ENCODE measurements at regions of chr1 and their contacts with region 1.

Region 1: GRCh38 chr1:151968058-151968457 is 25.6 kb downstream of the S100A10 start:
- DNase-seq: peak in 4 of 5 donors; percentile 30 to 74 (median 71)
- H3K4me3 ChIP-seq: no peak overlapping the region
- H3K4me3 Mint-ChIP-seq: no peak overlapping the region
- H3K27ac ChIP-seq: no peak overlapping the region
- H3K27ac Mint-ChIP-seq: no peak overlapping the region
- H3K4me1 ChIP-seq: peaks cover 5% of the 10 kb centered on the region
- H3K4me1 Mint-ChIP-seq: peaks cover 7 to 13% (median 11%) of the 10 kb centered on the region in 3 donors
- H3K27me3 ChIP-seq: no peaks in the 10 kb centered on the region
- H3K27me3 Mint-ChIP-seq: peaks cover 4% of the 10 kb centered on the region in 2 donors

Region 2: DNA sequence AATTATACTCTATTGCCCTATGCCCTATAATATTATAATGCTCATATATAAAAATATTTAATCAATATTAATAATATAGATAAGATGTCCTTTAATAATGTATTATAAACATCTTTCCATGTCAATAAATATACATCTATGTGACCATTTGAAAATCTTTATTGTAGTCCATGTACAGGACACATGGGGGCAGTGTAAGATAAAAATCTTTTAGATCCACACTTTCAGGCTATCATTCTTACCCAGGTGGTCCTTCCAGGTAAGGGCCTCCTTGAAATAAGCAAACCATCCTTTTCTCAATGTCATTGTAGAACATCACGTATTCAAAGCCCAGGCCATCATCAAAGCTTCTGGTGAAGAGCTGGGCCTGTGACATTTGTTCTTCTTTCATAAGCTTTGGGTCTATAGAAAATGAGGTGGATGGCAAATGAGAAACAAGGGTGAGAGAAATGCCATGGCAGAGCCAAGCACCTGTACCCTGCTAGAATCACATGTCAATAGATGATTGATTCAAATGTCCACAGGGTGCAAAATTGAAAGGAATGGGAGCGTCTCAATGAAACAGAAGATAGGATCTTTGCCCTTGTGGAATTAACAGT is 79.0 kb before region 1 on chr1:
- CTCF ChIA-PET with region 1: interaction called, 10 read pairs
- POLR2A ChIA-PET with region 1: no interaction called
- DNase-seq: peak in 2 of 5 donors; percentile 24 to 37
- H3K4me3 ChIP-seq: no peak overlapping the region
- H3K4me3 Mint-ChIP-seq: no peak overlapping the region
- H3K27ac ChIP-seq: no peak overlapping the region
- H3K27ac Mint-ChIP-seq: peak overlapping the region in 5 of 8 donors; percentile 15 to 52 (median 23)
- H3K4me1 ChIP-seq: peaks cover 13% of the 10 kb centered on the region
- H3K4me1 Mint-ChIP-seq: peaks cover 21 to 36% (median 25%) of the 10 kb centered on the region in 3 donors
- H3K27me3 ChIP-seq: no peaks in the 10 kb centered on the region
- H3K27me3 Mint-ChIP-seq: no peaks in the 10 kb centered on the region

Region 3: DNA sequence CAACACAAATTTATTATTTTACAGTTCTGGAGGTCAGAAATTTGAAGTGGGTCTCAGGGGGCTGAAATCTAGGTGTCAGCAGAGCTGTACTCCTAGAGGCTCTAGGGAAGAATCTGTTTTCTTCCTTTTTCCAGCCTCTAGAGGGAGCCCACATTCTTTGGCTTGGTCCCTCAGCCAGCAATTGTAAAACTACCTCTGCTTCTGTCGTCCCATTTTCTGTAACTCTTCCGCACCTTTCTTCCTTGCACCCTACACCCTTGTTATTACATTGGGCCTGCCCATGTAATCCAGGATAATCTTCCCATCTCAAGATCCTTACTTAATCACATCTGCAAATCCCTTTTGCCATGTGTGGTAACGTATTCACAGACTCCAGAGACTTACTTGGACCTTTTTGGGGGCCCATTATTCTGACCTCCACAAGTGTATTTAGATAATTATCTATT is 34.0 kb before region 1 on chr1:
- CTCF ChIA-PET with region 1: interaction called, 25 read pairs
- POLR2A ChIA-PET with region 1: no interaction called
- DNase-seq: peak in 4 of 5 donors; percentile 27 to 66 (median 57)
- H3K4me3 ChIP-seq: no peak overlapping the region
- H3K4me3 Mint-ChIP-seq: peak overlapping the region in 1 of 7 donors; percentile 23
- H3K27ac ChIP-seq: no peak overlapping the region
- H3K27ac Mint-ChIP-seq: peak overlapping the region in 2 of 8 donors; percentile 20 to 72
- H3K4me1 ChIP-seq: no peaks in the 10 kb centered on the region
- H3K4me1 Mint-ChIP-seq: peaks cover 2 to 6% (median 3%) of the 10 kb centered on the region in 3 donors
- H3K27me3 ChIP-seq: no peaks in the 10 kb centered on the region
- H3K27me3 Mint-ChIP-seq: peaks cover 4 to 5% of the 10 kb centered on the region in 2 donors

Region 4: GRCh38 chr1:151939779-151940178 is 28.3 kb before region 1 on chr1:
- CTCF ChIA-PET with region 1: interaction called, 25 read pairs
- POLR2A ChIA-PET with region 1: no interaction called
- DNase-seq: no peak
- H3K4me3 ChIP-seq: no peak overlapping the region
- H3K4me3 Mint-ChIP-seq: no peak overlapping the region
- H3K27ac ChIP-seq: no peak overlapping the region
- H3K27ac Mint-ChIP-seq: peak overlapping the region in 1 of 8 donors; percentile 27
- H3K4me1 ChIP-seq: peaks cover 8% of the 10 kb centered on the region
- H3K4me1 Mint-ChIP-seq: peaks cover 20 to 31% (median 22%) of the 10 kb centered on the region in 3 donors
- H3K27me3 ChIP-seq: no peaks in the 10 kb centered on the region
- H3K27me3 Mint-ChIP-seq: peaks cover 4 to 5% of the 10 kb centered on the region in 2 donors

Region 5: DNA sequence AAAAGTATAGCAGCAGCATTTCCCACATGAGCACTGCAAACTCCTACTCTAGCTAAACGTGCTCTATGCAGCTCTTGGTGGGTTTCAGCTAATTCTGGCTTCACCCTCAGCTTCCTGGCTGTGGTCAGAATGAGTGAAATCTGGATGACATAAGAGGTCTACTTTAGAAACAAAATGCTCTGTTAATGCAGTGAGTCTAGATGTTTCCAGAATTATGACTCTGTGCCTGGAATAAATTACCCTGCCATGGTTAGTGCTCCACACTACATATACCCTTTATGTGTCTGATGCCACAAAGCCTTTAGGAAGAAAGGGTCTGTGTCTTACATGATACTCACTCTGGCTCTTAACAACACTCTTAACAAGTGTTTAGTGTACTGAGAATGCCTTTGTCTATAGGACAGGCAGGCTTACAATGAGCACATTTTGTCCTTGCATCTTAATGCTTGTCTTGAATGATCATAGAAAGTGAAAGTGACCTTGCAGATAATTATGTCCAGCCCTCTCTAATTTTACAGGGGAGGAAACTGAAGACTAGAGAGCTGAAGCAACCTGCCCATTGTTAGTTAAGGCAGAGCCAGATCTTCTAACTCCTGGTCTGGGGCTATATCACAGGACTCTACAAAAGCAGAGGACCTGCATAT is 16.4 kb after region 1 on chr1:
- CTCF ChIA-PET with region 1: interaction called, 339 read pairs
- POLR2A ChIA-PET with region 1: no interaction called
- DNase-seq: peak in 4 of 5 donors; percentile 7 to 63 (median 28)
- H3K4me3 ChIP-seq: no peak overlapping the region
- H3K4me3 Mint-ChIP-seq: peak overlapping the region in 6 of 7 donors; percentile 3 to 66 (median 47)
- H3K27ac ChIP-seq: peak overlapping the region; percentile 6
- H3K27ac Mint-ChIP-seq: peak overlapping the region; percentile 40 to 91 (median 74)
- H3K4me1 ChIP-seq: peaks cover 40% of the 10 kb centered on the region
- H3K4me1 Mint-ChIP-seq: peaks cover 48 to 69% (median 60%) of the 10 kb centered on the region in 3 donors
- H3K27me3 ChIP-seq: no peaks in the 10 kb centered on the region
- H3K27me3 Mint-ChIP-seq: no peaks in the 10 kb centered on the region

Region 6: GRCh38 chr1:152013664-152014237 is 45.7 kb after region 1 on chr1:
- CTCF ChIA-PET with region 1: interaction called, 17 read pairs
- POLR2A ChIA-PET with region 1: no interaction called
- DNase-seq: no peak
- H3K4me3 ChIP-seq: no peak overlapping the region
- H3K4me3 Mint-ChIP-seq: no peak overlapping the region
- H3K27ac ChIP-seq: no peak overlapping the region
- H3K27ac Mint-ChIP-seq: peak overlapping the region in 1 of 8 donors; percentile 24
- H3K4me1 ChIP-seq: no peaks in the 10 kb centered on the region
- H3K4me1 Mint-ChIP-seq: peaks cover 3 to 5% (median 4%) of the 10 kb centered on the region in 3 donors
- H3K27me3 ChIP-seq: no peaks in the 10 kb centered on the region
- H3K27me3 Mint-ChIP-seq: peaks cover 11 to 64% of the 10 kb centered on the region in 2 donors

Region 7: GRCh38 chr1:152034646-152035405 is 66.8 kb after region 1 on chr1:
- CTCF ChIA-PET with region 1: interaction called, 10 read pairs
- POLR2A ChIA-PET with region 1: no interaction called
- DNase-seq: peak; percentile 32 to 74 (median 72)
- H3K4me3 ChIP-seq: peak overlapping the region; percentile 51
- H3K4me3 Mint-ChIP-seq: peak overlapping the region; percentile 93 to 99 (median 96)
- H3K27ac ChIP-seq: peak overlapping the region; percentile 79
- H3K27ac Mint-ChIP-seq: peak overlapping the region; percentile 94 to 100 (median 98)
- H3K4me1 ChIP-seq: peaks cover 40% of the 10 kb centered on the region
- H3K4me1 Mint-ChIP-seq: peaks cover 42 to 60% (median 44%) of the 10 kb centered on the region in 3 donors
- H3K27me3 ChIP-seq: no peaks in the 10 kb centered on the region
- H3K27me3 Mint-ChIP-seq: no peaks in the 10 kb centered on the region

Measured in CD8-positive, alpha-beta memory T cell (primary cell).